ENCODE measurements at regions of chr7 and their contacts with region 1.

Region 1: GRCh38 chr7:140175221-140176121 is 1.3 kb downstream of the KDM7A start:
- DNase-seq: peak; percentile 73
- ATAC-seq: peak; percentile 64
- H3K4me3 Mint-ChIP-seq: peak overlapping the region; percentile 88
- H3K27ac Mint-ChIP-seq: peak overlapping the region; percentile 95
- H3K4me1 Mint-ChIP-seq: peaks cover 44% of the 10 kb centered on the region
- H3K27me3 Mint-ChIP-seq: no peaks in the 10 kb centered on the region
- CTCF ChIP-seq: peak; percentile 45

Region 2: DNA sequence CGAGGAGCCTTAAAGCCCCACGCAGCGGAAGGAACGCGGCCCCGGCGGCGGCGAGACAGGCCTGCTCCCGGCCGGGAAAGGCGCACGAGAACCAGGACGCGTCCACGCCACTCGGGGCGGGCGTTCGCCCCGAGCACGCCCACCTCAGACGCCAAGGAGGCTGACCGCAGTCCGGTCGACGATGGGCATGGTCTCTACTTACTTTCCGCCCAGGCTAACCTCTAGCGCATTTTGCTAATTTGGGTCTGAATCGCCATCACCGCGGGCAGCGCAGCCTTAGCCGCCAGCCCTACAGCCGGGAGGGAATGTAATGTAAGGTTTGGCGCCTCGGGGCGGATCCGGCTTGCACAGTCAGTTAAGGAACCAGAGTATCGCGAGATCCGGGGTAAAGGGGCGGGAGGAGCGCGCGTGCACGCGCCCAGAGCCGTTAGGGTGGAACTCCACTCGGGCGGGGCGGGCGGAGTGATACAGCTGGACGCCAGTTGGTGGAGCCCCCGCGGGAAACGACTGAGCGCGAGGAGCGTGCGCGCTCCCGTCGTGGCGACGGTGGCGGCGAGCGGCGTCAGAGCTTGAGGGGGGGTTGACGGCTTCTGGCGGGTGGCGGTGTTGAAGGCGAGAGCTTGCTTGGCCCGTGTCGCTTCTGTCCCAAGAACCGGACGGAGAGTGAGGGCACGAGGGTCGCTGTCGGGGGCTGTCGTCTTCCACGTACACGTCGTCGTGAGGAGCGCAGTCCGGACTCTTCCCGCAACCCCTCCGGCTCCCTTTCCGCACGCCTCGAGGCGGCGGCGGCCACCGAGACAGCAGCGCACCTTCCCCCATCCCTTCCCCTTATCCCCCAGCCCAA is 815.9 kb before region 1 on chr7 and contains the start of gene LUC7L2:
- CTCF ChIA-PET with region 1: no interaction called
- POLR2A ChIA-PET with region 1: interaction called, 6 read pairs
- intact Hi-C with region 1: loop called (anchors 1 kb)
- DNase-seq: peak; percentile 97
- ATAC-seq: peak; percentile 78
- H3K4me3 Mint-ChIP-seq: peak within 1 kb of the TSS; percentile 98
- H3K27ac Mint-ChIP-seq: peak within 1 kb of the TSS; percentile 100
- H3K4me1 Mint-ChIP-seq: peaks cover 41% of the 10 kb centered on the region
- H3K27me3 Mint-ChIP-seq: no peaks in the 10 kb centered on the region
- CTCF ChIP-seq: no peak
- total RNA-seq, gene LUC7L2: 94.0 and 118 TPM in 2 replicates

Region 3: DNA sequence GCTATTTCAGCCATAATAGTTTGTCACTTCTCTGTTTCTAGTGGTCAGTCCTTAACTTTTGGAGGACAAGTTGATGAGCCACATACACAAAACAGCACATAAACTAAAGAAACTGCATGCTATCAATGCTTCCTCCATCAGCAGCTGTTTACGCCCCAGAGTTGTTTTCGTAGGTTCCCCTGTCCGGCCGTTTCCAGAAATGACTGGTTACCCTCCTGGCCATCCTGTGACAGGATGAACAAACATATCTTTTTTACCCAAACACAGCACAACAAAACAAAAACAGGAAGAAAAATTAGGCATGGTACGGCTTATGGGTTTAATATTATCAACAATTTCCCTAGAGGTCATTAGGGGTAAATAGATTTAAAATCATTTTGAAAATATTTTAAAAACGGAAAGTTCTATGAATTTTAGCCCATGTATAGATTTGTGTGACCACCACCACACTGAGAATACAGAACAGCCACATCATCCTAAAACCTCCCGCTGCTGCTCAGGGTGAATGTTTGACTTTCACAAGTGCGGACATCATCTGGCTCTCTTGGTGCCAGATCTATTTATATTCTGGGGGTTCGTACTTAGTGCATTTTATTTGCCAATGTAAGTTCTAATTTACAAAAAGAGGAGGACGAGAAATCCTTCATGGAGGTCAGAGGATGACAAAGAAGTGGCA is 472.5 kb before region 1 on chr7:
- CTCF ChIA-PET with region 1: no interaction called
- POLR2A ChIA-PET with region 1: no interaction called
- intact Hi-C with region 1: no loop called
- DNase-seq: no peak
- ATAC-seq: peak; percentile 14
- H3K4me3 Mint-ChIP-seq: no peak overlapping the region
- H3K27ac Mint-ChIP-seq: peak overlapping the region; percentile 56
- H3K4me1 Mint-ChIP-seq: peaks cover 63% of the 10 kb centered on the region
- H3K27me3 Mint-ChIP-seq: no peaks in the 10 kb centered on the region
- CTCF ChIP-seq: no peak

Region 4: DNA sequence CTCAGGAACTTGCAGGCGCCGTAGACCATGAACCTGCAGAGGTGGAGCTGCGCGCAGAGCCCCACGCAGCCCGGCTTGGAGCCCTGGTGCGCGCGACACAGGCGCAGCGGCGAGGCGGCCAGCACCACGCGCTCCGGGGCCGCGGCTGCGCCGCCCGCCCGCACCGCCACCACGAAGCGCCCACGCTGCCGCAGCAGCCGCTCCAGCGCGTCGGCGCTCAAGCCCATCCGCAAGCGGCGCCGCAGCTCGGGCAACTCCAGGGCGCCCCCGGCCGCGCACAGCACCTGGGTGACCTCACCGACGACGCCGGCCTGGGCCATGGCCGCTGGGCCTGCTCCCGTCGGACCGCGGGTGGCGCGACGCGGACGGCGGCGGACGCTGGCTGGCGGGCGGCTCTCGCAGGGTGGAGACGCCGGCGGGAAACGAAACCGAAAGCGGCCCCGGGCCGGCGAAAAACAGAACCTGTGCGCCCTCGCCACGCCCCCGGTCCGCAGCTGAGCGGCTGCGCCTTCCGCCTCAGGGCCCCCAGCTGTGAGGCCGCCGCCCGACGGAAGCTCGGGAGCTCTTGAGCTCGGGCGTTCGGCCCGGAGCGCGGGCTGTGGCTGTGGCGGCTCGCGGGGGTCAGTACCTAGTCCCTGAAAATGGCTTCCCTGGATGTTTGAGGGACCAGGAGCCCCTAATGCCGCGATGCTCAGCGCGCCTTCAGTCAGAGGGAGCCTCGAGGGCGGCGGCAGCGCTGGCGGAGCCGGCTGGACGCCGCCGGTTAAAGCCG is 112.8 kb before region 1 on chr7 and contains the start of gene PARP12:
- CTCF ChIA-PET with region 1: no interaction called
- POLR2A ChIA-PET with region 1: interaction called, 8 read pairs
- intact Hi-C with region 1: loop called (anchors 1 kb)
- DNase-seq: peak; percentile 93
- ATAC-seq: peak; percentile 81
- H3K4me3 Mint-ChIP-seq: peak within 1 kb of the TSS; percentile 97
- H3K27ac Mint-ChIP-seq: peak within 1 kb of the TSS; percentile 98
- H3K4me1 Mint-ChIP-seq: peaks cover 47% of the 10 kb centered on the region
- H3K27me3 Mint-ChIP-seq: no peaks in the 10 kb centered on the region
- CTCF ChIP-seq: no peak
- total RNA-seq, gene PARP12: 104 and 128 TPM in 2 replicates

Region 5: GRCh38 chr7:140230861-140231770 is 55.6 kb after region 1 on chr7:
- CTCF ChIA-PET with region 1: interaction called, 4 read pairs
- POLR2A ChIA-PET with region 1: interaction called, 129 read pairs
- intact Hi-C with region 1: loop called (anchors 1 kb)
- DNase-seq: no peak
- ATAC-seq: peak; percentile 30
- H3K4me3 Mint-ChIP-seq: peak overlapping the region; percentile 91
- H3K27ac Mint-ChIP-seq: peak overlapping the region; percentile 95
- H3K4me1 Mint-ChIP-seq: peaks cover 59% of the 10 kb centered on the region
- H3K27me3 Mint-ChIP-seq: no peaks in the 10 kb centered on the region
- CTCF ChIP-seq: no peak

Region 6: DNA sequence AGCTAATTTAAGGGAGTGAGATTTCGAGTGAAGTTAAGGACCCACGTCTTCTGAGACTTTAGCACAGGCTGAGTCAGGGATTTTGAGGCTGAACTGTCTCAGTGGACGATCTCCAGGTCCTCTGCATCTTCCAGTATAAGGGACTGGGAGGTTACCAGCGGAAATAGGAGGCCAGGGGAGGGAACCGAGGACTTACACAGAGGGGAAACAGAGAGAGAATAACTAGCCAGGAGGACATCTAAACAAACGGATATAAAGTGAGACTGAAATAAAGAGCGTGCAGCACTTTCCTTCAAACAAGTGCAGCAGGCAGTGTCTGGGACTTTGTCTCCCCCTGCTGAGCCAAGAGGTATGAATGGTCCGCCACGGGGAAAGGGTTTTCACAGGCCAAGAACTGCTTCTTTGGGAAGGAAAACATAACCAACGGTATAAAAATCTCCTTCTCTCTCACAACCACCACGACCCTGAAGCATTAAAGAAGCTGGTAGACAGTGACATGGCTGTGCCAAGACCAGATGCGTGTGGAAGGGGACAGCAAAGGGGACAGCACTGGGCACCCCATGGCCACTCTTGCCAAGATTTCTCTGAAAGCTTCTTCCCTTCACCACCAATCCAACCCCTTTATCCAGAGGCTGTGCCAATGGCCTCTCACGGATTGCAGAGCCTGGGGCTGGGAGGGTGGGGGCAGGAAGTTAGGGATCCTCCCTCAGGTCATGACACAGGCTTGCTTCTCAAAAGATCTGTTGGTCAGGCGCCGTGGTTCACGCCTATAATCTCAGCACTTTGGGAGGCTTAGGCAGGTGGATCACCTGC is 150.9 kb after region 1 on chr7:
- CTCF ChIA-PET with region 1: interaction called, 7 read pairs
- POLR2A ChIA-PET with region 1: no interaction called
- intact Hi-C with region 1: loop called (anchors 1 kb)
- DNase-seq: peak; percentile 21
- ATAC-seq: peak; percentile 75
- H3K4me3 Mint-ChIP-seq: no peak overlapping the region
- H3K27ac Mint-ChIP-seq: no peak overlapping the region
- H3K4me1 Mint-ChIP-seq: no peaks in the 10 kb centered on the region
- H3K27me3 Mint-ChIP-seq: no peaks in the 10 kb centered on the region
- CTCF ChIP-seq: no peak

Region 7: DNA sequence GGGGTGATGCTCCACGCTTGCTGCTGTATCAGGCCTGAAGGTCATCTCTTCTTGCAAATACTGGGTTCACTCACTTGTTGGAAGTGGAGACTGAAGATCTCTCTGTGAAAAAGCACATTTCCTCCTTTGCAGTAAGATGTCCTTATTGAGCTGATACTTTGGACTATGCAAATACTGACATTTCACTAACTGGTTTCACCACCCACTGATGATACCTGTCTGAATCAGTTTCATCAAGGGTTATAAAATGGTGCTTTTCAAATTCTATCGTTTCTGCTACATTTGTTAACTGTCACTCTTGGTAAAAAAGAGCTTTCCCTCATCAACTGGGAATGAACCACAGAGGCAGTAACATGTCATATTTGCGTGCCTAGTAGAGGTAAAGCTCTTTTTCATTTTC is 263.9 kb after region 1 on chr7:
- CTCF ChIA-PET with region 1: no interaction called
- POLR2A ChIA-PET with region 1: no interaction called
- intact Hi-C with region 1: loop called (anchors 1 kb)
- DNase-seq: no peak
- ATAC-seq: no peak
- H3K4me3 Mint-ChIP-seq: no peak overlapping the region
- H3K27ac Mint-ChIP-seq: no peak overlapping the region
- H3K4me1 Mint-ChIP-seq: peaks cover 3% of the 10 kb centered on the region
- H3K27me3 Mint-ChIP-seq: no peaks in the 10 kb centered on the region
- CTCF ChIP-seq: no peak

Region 8: GRCh38 chr7:140673063-140673773 is 497.7 kb after region 1 on chr7:
- CTCF ChIA-PET with region 1: no interaction called
- POLR2A ChIA-PET with region 1: no interaction called
- intact Hi-C with region 1: loop called (anchors 5 kb)
- DNase-seq: peak; percentile 67
- ATAC-seq: peak; percentile 58
- H3K4me3 Mint-ChIP-seq: peak overlapping the region; percentile 88
- H3K27ac Mint-ChIP-seq: peak overlapping the region; percentile 86
- H3K4me1 Mint-ChIP-seq: peaks cover 57% of the 10 kb centered on the region
- H3K27me3 Mint-ChIP-seq: no peaks in the 10 kb centered on the region
- CTCF ChIP-seq: no peak

Measured in activated B cell treated with CpG ODN at 0.5 μM for 24 hours (primary cell).